Activated T-helper 1 cell treated with anti-CD3 and anti-CD28 coated beads, Interleukin-12 subunit alpha, Interleukin-12 subunit beta, Interleukin-2, Interleukin-4 antibody, amounts not matched to agents 30 ng/mL and 10 ng/mL and 1 ng/mL, durations not matched to agents 14 hours and 24 hours and 36 hours (primary cell): ENCODE measurements at regions of chr9 and their contacts with region 1.

Region 1: DNA sequence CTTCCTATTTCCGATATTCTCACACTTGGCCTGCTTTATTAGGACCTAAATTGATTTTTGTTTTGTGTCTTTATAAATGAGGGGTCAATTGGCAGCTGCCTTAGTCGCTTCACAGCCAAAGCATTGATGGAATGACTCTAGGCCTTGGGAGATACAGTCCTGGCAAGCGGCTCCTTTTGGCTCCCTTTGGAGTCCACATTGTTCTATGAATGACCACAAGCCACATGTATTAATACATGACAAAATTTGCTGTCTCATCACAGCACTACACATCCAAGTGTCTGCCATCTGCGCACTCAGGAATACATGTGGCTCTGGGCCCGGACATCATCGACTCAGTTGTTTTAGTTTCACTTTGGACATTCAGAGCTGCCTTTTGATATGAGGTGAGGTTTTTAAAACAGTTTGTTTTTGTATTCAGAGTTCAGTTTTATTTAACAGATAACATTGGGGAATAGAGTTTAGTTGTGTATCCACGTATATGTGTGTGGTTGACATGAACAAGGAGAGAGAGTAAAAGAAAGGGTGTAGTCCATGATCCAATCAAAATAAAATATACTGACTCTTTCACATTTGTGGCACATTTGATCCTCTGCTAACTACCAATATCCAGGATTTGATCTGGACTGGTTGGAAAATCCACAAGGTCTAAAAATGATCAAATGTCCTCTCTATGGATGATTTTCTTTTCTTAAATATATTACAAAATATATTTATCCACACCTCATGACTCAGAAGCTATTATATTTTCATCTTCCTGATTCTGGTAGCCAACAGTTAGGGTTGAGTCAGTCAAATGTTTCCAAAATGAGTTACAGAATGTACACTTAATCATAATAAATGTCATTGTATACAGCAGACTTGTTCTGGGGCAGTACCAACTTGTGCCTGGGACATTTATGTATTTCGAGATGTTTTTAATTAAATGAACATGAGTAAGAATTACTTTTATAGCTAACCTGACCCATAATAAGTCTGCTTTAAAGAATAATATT is 114.0 kb upstream of the MTAP start:
- DNase-seq: no peak
- H3K4me3 Mint-ChIP-seq: no peak overlapping the region
- H3K27ac Mint-ChIP-seq: no peak overlapping the region
- H3K4me1 Mint-ChIP-seq: peaks cover 41% of the 10 kb centered on the region
- H3K27me3 Mint-ChIP-seq: peaks cover 2% of the 10 kb centered on the region

Region 2: DNA sequence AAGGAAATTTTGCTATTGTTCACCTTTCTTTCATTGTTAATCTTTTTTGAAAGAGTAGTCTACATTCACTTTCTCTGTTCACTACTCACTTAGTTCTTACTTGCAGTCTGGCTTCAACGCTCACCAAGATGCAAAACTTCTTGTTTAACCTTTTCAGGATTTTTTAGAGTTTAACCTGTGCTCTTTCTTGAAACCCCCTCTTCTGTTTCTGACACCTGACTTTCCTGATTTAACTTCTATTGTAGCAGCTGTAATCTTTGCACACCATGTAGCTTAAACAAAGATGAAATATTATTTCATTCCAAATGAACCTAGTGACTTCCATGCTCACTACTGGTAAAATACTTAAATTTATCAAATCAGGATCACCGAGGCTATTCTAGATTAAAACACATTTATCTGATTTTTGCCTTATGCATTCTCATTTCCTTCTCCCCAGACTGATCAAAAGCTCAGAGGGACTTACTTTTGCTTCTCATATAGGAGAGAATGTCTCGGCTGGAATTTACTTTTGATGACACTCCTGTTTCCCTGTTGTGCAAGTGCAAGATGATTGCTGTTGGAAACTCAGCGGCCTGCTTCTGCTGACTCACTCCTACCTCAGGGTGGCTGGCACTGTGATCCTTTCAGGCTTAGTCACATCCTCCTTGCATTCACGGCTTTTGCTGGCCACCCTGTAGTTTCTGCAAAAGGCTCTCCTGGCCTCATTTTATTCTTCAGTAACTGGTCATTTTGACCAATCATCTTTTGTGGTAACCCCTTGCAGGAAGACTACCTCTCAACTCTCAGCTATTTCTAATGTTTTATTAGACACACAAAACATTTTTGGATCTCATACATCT is 97.0 kb before region 1 on chr9:
- intact Hi-C with region 1: loop called (anchors 5 kb)
- DNase-seq: peak; percentile 24
- H3K4me3 Mint-ChIP-seq: no peak overlapping the region
- H3K27ac Mint-ChIP-seq: peak overlapping the region; percentile 40
- H3K4me1 Mint-ChIP-seq: peaks cover 14% of the 10 kb centered on the region
- H3K27me3 Mint-ChIP-seq: peaks cover 7% of the 10 kb centered on the region

Region 3: DNA sequence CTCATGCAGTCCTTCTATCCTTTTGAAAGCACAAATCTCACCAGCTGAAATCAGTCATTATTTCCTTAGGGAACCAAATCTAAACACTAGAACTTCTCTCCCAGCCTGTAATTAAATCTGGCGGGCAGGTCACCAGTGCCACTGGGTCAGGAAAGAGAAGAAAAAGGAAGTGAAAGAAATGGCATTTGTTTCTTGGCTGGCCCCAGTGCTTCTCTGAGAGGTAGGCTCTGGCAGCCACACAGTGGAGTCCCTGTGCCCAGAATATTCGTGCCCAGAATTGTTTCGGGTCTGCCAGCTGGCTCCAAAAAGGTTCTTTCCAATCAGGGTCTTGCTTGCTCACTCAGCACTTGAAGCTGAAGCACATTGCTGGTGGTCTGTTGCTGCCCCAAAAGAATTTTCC is 19.9 kb before region 1 on chr9:
- intact Hi-C with region 1: loop called (anchors 1 kb)
- DNase-seq: no peak
- H3K4me3 Mint-ChIP-seq: no peak overlapping the region
- H3K27ac Mint-ChIP-seq: no peak overlapping the region
- H3K4me1 Mint-ChIP-seq: peaks cover 6% of the 10 kb centered on the region
- H3K27me3 Mint-ChIP-seq: peaks cover 18% of the 10 kb centered on the region

Region 4: GRCh38 chr9:21831961-21832509 is 143.6 kb after region 1 on chr9:
- intact Hi-C with region 1: no loop called
- DNase-seq: peak; percentile 66
- H3K4me3 Mint-ChIP-seq: peak overlapping the region; percentile 20
- H3K27ac Mint-ChIP-seq: peak overlapping the region; percentile 73
- H3K4me1 Mint-ChIP-seq: peaks cover 73% of the 10 kb centered on the region
- H3K27me3 Mint-ChIP-seq: no peaks in the 10 kb centered on the region